CD14-positive monocyte (primary cell): ENCODE measurements at regions of chr3 and their contacts with region 1.

Region 1: GRCh38 chr3:71710906-71711494 is 14.2 kb downstream of the EIF4E3 start:
- DNase-seq: peak; percentile 44 to 77 (median 56)
- H3K4me3 ChIP-seq: no peak overlapping the region
- H3K4me3 Mint-ChIP-seq: no peak overlapping the region
- H3K27ac ChIP-seq: no peak overlapping the region
- H3K27ac Mint-ChIP-seq: peak overlapping the region in 3 of 7 donors; percentile 10 to 48 (median 24)
- H3K4me1 ChIP-seq: peaks cover 6 to 32% of the 10 kb centered on the region in 2 donors
- H3K4me1 Mint-ChIP-seq: peaks cover 66% of the 10 kb centered on the region
- H3K27me3 ChIP-seq: no peaks in the 10 kb centered on the region
- H3K27me3 Mint-ChIP-seq: no peaks in the 10 kb centered on the region
- CTCF ChIP-seq: peak; percentile 76

Region 2: DNA sequence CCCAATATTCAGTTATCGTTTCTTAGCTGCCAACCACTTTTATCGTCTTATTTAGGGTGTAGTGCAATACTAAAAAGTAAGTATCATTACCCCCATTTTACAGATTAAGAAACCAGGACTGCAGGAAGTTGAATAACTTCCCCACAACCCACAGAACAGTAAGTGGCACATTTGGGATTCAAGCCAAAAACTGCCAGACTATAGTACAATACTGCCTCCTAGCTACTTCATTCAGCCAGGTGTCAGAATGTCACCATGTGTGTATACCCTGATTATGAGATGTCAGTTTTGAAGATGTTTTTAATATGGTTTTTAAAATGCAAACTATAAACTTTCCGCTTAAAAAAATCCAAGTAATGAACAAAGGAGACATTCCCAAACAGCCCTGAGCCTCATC is 148.1 kb after region 1 on chr3:
- intact Hi-C with region 1: loop called in 1 of 2 experiments (anchors 5 kb)
- DNase-seq: peak; percentile 78 to 93 (median 83)
- H3K4me3 ChIP-seq: peak overlapping the region in 1 of 3 experiments; percentile 26
- H3K4me3 Mint-ChIP-seq: peak overlapping the region; percentile 6 to 57
- H3K27ac ChIP-seq: peak overlapping the region in 1 of 2 donors; percentile 18
- H3K27ac Mint-ChIP-seq: peak overlapping the region; percentile 73 to 95 (median 84)
- H3K4me1 ChIP-seq: peaks cover 14 to 27% of the 10 kb centered on the region in 2 donors
- H3K4me1 Mint-ChIP-seq: peaks cover 28% of the 10 kb centered on the region
- H3K27me3 ChIP-seq: peaks cover under 1 to 4% of the 10 kb centered on the region in 2 donors
- H3K27me3 Mint-ChIP-seq: peaks cover 4 to 13% (median 5%) of the 10 kb centered on the region in 3 donors
- CTCF ChIP-seq: peak; percentile 77

Region 3: GRCh38 chr3:72821161-72821781 is 1110.3 kb after region 1 on chr3:
- intact Hi-C with region 1: loop called in 1 of 2 experiments (anchors 10 kb)
- DNase-seq: peak in 2 of 3 donors; percentile 7 to 27
- H3K4me3 ChIP-seq: no peak overlapping the region
- H3K4me3 Mint-ChIP-seq: no peak overlapping the region
- H3K27ac ChIP-seq: no peak overlapping the region
- H3K27ac Mint-ChIP-seq: no peak overlapping the region
- H3K4me1 ChIP-seq: peaks cover 4 to 11% of the 10 kb centered on the region in 2 donors
- H3K4me1 Mint-ChIP-seq: peaks cover 7% of the 10 kb centered on the region
- H3K27me3 ChIP-seq: no peaks in the 10 kb centered on the region
- H3K27me3 Mint-ChIP-seq: no peaks in the 10 kb centered on the region
- CTCF ChIP-seq: no peak